Heart right ventricle (tissue), 16 donors: ENCODE measurements at regions of chr2 and their contacts with region 1.

Region 1: GRCh38 chr2:25131567-25132298 is 36.6 kb downstream of the POMC start:
- DNase-seq: peak; percentile 35 to 38
- ATAC-seq: peak in 7 of 8 donors; percentile 13 to 47 (median 34)
- H3K4me3 ChIP-seq: peak overlapping the region in 9 of 10 donors; percentile 14 to 49 (median 38)
- H3K27ac ChIP-seq: no peak overlapping the region
- H3K4me1 ChIP-seq: peaks cover 4 to 32% (median 14%) of the 10 kb centered on the region in 9 donors
- H3K27me3 ChIP-seq: peaks cover 0 to 43% (median 0%) of the 10 kb centered on the region in 7 donors
- CTCF ChIP-seq: no peak

Region 2: DNA sequence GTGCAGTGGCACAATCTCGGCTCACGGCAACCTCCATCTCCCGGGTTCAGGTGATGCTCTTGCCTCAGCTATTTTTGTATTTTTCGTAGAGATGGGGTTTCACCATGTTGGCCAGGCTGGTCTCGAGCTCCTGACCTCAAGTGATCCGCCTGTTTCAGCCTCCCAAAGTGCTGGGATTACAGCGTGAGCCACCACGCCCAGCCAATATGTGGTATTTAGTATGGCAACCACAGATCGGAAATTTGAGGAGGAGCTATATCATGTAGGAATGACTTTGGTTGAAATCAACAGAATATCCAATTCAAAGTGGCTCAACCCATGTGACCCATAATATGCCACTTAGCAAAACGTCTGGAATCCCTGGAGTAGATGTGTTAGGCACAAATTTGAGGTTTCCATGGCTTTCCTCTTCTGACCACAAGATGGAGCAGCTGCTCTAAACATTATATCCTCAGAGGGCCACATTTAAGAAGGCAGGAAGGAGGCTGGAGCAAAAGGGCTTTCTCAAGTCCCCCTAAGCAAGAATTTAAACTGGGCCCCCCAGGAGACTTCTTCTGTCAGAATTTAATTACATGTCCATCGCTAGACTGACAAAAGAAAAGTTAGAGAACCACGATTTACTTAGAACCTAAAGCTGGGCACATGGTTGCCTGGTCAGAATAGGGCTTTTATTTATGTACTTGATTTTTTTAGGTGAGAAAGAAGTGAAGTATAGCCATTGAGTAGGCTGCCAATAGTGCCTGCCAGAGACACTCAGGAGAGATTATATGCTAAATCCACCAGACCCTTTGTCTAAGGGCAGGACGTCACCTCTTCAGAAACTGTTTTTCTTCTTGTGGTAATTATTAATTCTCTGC is 721.8 kb before region 1 on chr2:
- intact Hi-C with region 1: loop called in 2 of 10 experiments (anchors 10 kb)
- DNase-seq: peak in 1 of 2 donors; percentile 48
- ATAC-seq: peak in 7 of 8 donors; percentile 75 to 84 (median 81)
- H3K4me3 ChIP-seq: no peak overlapping the region
- H3K27ac ChIP-seq: no peak overlapping the region
- H3K4me1 ChIP-seq: peaks cover 0 to 3% (median 0%) of the 10 kb centered on the region in 9 donors
- H3K27me3 ChIP-seq: peaks cover 0 to 14% (median 6%) of the 10 kb centered on the region in 7 donors
- CTCF ChIP-seq: peak; percentile 71 to 93 (median 84)

Region 3: GRCh38 chr2:24827321-24828237 is 304.2 kb before region 1 on chr2:
- intact Hi-C with region 1: no loop called
- DNase-seq: peak; percentile 68 to 86
- ATAC-seq: peak; percentile 89 to 97 (median 92)
- H3K4me3 ChIP-seq: no peak overlapping the region
- H3K27ac ChIP-seq: peak overlapping the region in 2 of 10 donors; percentile 8 to 26
- H3K4me1 ChIP-seq: peaks cover 4 to 22% (median 14%) of the 10 kb centered on the region in 9 donors
- H3K27me3 ChIP-seq: no peaks in the 10 kb centered on the region
- CTCF ChIP-seq: peak; percentile 81 to 96 (median 90)

Region 4: GRCh38 chr2:24977631-24978030 is 154.1 kb before region 1 on chr2:
- intact Hi-C with region 1: loop called (anchors 1 to 5 kb)
- DNase-seq: no peak
- ATAC-seq: no peak
- H3K4me3 ChIP-seq: no peak overlapping the region
- H3K27ac ChIP-seq: no peak overlapping the region
- H3K4me1 ChIP-seq: peaks cover 0 to 24% (median 11%) of the 10 kb centered on the region in 9 donors
- H3K27me3 ChIP-seq: no peaks in the 10 kb centered on the region
- CTCF ChIP-seq: no peak

Region 5: GRCh38 chr2:25041928-25042320 is 89.8 kb before region 1 on chr2 and contains the start of gene EFR3B:
- intact Hi-C with region 1: loop called in 4 of 10 experiments (anchors 5 to 10 kb)
- DNase-seq: peak; percentile 96
- ATAC-seq: peak; percentile 97 to 99 (median 98)
- H3K4me3 ChIP-seq: peak within 1 kb of the TSS; percentile 63 to 93 (median 83)
- H3K27ac ChIP-seq: peak within 1 kb of the TSS; percentile 2 to 95 (median 88)
- H3K4me1 ChIP-seq: peaks cover 8 to 35% (median 23%) of the 10 kb centered on the region in 9 donors
- H3K27me3 ChIP-seq: peaks cover 0 to 47% (median 0%) of the 10 kb centered on the region in 7 donors
- CTCF ChIP-seq: peak in 3 of 9 donors; percentile 4 to 9 (median 8)
- total RNA-seq, gene EFR3B: 2.6 to 15.2 (median 7.9) TPM

Region 6: GRCh38 chr2:25098670-25099486 is 32.9 kb before region 1 on chr2:
- intact Hi-C with region 1: loop called in 1 of 10 experiments (anchors 2 kb)
- DNase-seq: peak; percentile 28 to 80
- ATAC-seq: peak; percentile 82 to 99 (median 97)
- H3K4me3 ChIP-seq: no peak overlapping the region
- H3K27ac ChIP-seq: peak overlapping the region; percentile 62 to 92 (median 84)
- H3K4me1 ChIP-seq: peaks cover 0 to 23% (median 15%) of the 10 kb centered on the region in 9 donors
- H3K27me3 ChIP-seq: no peaks in the 10 kb centered on the region
- CTCF ChIP-seq: no peak